K562 (cell line): ENCODE measurements at regions of chrX and their contacts with region 1.

Region 1: GRCh38 chrX:66728818-66729271 is 90.0 kb upstream of the EDA2R start:
- DNase-seq: peak; percentile 55 to 72 (median 58)
- ATAC-seq: peak; percentile 100
- H3K4me3 ChIP-seq: peak overlapping the region; percentile 55
- H3K27ac ChIP-seq: peak overlapping the region; percentile 78
- H3K4me1 ChIP-seq: no peaks in the 10 kb centered on the region
- H3K27me3 ChIP-seq: no peaks in the 10 kb centered on the region
- CTCF ChIP-seq: peak; percentile 57 to 88 (median 64)
- EP300 ChIP-seq: no peak
- POLR2A ChIP-seq: no peak
- RAD21 ChIP-seq: peak; percentile 49 to 63

Region 2: GRCh38 chrX:65581661-65582339 is 1147.0 kb before region 1 on chrX:
- CTCF ChIA-PET with region 1: interaction called, 12 read pairs
- POLR2A ChIA-PET with region 1: no interaction called
- in situ Hi-C with region 1: loop called (anchors 10 kb)
- intact Hi-C with region 1: loop called (anchors 5 kb)
- DNase-seq: peak; percentile 53 to 80 (median 60)
- ATAC-seq: peak; percentile 93
- H3K4me3 ChIP-seq: no peak overlapping the region
- H3K27ac ChIP-seq: peak overlapping the region; percentile 62; the same call in 2 of the 3 replicates
- H3K4me1 ChIP-seq: peaks cover 4 to 12% of the 10 kb centered on the region in 2 experiments; a peak in 4 of 5 replicates
- H3K27me3 ChIP-seq: no peaks in the 10 kb centered on the region
- CTCF ChIP-seq: peak; percentile 74 to 90 (median 77)
- EP300 ChIP-seq: no peak
- POLR2A ChIP-seq: no peak
- RAD21 ChIP-seq: peak; percentile 86 to 89

Region 3: DNA sequence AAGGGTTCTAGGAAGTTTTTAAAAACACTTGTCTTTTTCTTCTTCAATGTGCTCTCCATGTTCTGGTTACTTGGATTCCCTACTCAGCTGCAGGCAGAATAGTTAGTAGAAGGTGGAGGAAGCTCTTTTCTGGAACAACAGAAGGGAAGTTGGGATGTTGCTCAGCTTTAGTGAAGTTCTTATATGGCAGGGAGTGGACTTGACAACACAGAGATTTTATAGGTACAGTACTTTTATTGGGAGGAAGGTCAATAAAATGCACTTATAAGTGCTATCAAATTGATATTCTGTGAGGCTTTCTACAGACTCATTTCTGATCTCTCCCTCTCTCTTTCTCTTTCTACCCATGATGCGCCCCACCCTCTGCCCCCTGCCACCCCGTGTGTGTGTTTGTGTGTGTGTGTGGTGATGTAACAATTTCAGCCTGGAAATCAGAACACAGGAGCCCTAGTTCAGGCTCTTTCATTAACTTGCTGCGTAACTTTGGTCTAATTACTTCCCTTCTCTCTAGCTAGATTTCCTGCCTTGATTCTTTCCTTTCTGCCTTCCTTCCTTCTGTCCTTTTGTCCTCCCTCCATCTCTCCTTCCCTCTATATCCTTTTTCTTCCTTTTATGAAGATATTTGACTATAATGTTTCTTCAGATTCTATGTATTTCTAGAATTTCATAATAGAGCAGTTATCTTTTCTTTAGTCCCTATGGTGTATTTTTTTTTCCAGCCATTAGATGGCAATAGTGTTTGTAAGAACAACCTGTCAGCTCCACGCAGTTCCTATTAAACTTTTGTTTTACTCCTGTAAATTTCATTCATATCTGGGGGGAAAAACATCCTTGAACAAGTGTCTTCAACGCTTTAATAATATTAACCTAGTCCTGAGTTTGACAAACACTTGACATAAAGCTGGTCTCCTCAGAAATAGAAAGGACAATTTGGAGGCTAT is 527.7 kb before region 1 on chrX:
- CTCF ChIA-PET with region 1: interaction called, 4 read pairs
- POLR2A ChIA-PET with region 1: no interaction called
- in situ Hi-C with region 1: no loop called
- intact Hi-C with region 1: loop called (anchors 2 kb)
- DNase-seq: no peak
- ATAC-seq: peak; percentile 47; the same call in 1 of the 3 replicates
- H3K4me3 ChIP-seq: no peak overlapping the region
- H3K27ac ChIP-seq: no peak overlapping the region
- H3K4me1 ChIP-seq: no peaks in the 10 kb centered on the region
- H3K27me3 ChIP-seq: no peaks in the 10 kb centered on the region
- CTCF ChIP-seq: peak in 1 of 3 experiments; percentile 42; a peak in 2 of 6 replicates
- EP300 ChIP-seq: no peak
- POLR2A ChIP-seq: no peak
- RAD21 ChIP-seq: peak; percentile 20 to 28; a peak in 3 of 4 replicates

Region 4: GRCh38 chrX:66638591-66639500 is 90.0 kb before region 1 on chrX and contains the start of gene EDA2R:
- CTCF ChIA-PET with region 1: no interaction called
- POLR2A ChIA-PET with region 1: no interaction called
- in situ Hi-C with region 1: no loop called
- intact Hi-C with region 1: no loop called
- DNase-seq: no peak
- ATAC-seq: peak; percentile 68
- H3K4me3 ChIP-seq: no peak within 1 kb of the TSS
- H3K27ac ChIP-seq: no peak within 1 kb of the TSS
- H3K4me1 ChIP-seq: no peaks in the 10 kb centered on the region
- H3K27me3 ChIP-seq: no peaks in the 10 kb centered on the region
- CTCF ChIP-seq: no peak
- EP300 ChIP-seq: no peak
- POLR2A ChIP-seq: no peak
- RAD21 ChIP-seq: no peak
- polyA plus RNA-seq, gene EDA2R: 0.03 TPM in 1 of 2 experiments, not detected in the other